ENCODE measurements at regions of chr6 and their contacts with region 1.

Region 1: DNA sequence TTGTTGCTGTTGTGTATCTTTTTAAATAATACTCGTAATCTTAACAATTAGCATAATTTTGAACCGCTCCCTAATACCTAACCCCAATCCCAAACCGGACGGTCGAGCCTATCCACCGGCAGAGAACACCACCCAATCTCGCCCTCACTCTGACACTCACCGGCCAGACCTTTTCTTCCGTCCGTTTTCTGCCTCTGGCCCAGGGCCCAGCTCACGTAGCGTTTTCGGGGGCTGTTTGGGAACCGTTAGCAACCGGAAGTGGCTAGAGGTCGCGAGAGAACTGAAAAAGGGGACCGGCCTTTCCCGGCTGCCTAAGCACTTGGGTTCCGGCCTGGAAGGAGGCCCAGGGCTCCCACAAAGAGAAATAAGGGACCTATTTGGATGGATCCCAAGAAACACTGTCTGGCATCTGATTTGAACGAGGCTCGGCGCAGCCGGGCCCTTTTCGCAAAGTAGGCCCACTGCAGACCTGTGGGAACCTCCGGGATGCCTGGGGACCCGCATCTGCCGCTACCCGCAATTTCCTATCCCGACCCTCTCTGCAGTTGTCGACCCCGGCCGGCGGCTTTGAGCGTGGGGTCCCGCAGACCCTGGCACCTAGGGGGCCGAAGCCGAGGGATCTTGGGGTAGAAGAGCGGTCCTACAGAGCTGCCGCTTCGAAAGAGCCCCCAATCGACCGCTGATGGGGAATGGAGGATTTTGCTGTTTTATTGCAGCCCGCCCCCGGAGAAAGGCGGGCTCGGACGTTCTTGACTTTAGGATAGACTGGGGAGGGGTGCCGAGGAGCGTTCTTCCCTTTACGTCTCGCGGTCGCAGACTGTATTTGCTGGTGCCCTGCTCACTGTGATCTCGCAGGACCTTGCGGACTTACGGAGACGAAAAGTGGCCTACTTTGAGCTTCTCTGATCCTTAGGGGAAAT is 4.8 kb upstream of the ZKSCAN8 start:
- DNase-seq: peak; percentile 89
- H3K4me3 ChIP-seq: peak overlapping the region; percentile 63 to 90 (median 90)
- H3K27ac ChIP-seq: peak overlapping the region; percentile 63
- H3K4me1 ChIP-seq: peaks cover 20% of the 10 kb centered on the region
- H3K27me3 ChIP-seq: no peaks in the 10 kb centered on the region
- CTCF ChIP-seq: no peak

Region 2: DNA sequence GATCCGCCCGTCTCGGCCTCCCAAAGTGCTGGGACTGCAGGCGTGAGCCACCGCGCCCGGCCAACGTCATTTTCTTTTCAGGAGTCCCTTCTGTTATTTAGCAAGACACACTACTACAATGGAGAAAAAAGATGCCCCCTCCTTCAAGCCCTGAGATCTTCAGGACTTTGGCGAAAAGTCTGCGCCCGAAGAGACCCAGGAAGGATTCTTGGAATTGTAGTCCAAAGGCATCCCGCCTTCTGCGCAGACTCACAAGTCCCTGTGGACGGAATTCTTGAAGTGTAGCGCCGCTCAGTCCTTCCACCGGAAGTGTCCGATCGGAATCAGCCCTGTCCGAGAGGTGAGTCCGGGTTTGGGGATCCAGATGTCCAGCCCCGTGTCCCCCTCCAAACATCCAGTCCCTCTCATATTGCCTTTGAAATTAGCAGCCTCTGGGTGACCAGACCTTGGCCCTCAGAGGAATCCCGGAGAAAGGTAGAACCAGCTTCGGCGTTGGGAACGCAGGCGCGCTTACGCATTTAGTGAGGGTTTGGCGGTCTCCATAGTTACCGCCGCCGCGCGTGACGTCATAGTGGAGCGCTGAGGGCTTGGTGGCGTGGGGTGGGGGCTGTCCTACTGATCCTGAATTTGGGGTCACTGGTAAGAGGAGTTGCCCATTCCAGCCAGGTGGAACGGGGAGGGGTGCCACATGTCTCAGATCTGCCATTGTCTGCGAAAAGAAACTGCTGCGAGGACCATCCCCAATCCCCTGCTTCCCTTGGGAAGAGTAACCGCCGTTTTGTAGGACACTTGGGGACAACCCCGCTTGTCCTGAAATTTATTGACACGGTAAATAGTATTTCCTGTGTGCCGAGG is 56.0 kb before region 1 on chr6:
- CTCF ChIA-PET with region 1: no interaction called
- dilution Hi-C with region 1: no loop called
- in situ Hi-C with region 1: no loop called
- intact Hi-C with region 1: loop called (anchors 1 kb)
- DNase-seq: peak; percentile 93
- H3K4me3 ChIP-seq: peak overlapping the region; percentile 52 to 67 (median 66)
- H3K27ac ChIP-seq: peak overlapping the region; percentile 96
- H3K4me1 ChIP-seq: peaks cover 4% of the 10 kb centered on the region
- H3K27me3 ChIP-seq: no peaks in the 10 kb centered on the region
- CTCF ChIP-seq: no peak

Region 3: DNA sequence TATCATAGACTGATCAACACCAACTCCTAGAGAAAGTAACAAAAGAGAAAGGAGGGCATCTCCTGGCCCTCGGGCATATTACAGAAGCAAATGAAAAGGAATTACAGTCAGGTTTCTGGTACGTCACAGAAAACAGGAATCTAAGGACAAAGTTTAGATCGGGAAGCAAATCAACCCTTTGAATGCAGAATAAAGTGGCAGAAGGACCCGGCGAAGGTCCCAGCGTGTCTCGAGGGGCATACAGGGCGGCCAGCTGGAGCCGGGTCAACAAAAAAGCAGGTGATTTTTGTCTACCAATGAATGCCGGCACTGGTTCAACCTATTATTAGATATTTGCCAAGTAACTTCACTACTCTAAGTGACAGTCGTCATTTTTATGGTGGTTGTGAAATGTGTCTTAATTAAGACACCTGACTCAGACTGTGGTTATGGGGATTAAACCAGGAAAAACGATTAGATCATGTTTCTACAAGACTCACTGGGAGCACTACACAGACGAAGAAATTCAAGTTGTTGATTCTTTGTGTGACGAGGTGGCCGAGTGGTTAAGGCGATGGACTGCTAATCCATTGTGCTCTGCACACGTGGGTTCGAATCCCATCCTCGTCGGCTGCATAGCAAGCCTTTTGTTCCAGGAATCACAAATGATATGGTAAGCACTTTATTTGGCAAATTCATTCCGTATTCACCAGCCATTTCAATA is 75.8 kb after region 1 on chr6:
- CTCF ChIA-PET with region 1: no interaction called
- dilution Hi-C with region 1: no loop called
- in situ Hi-C with region 1: loop called in 1 of 2 experiments (anchors 5 kb)
- intact Hi-C with region 1: loop called (anchors 1 kb)
- DNase-seq: peak; percentile 93
- H3K4me3 ChIP-seq: peak overlapping the region; percentile 61 to 62 (median 61)
- H3K27ac ChIP-seq: peak overlapping the region; percentile 77
- H3K4me1 ChIP-seq: peaks cover 19% of the 10 kb centered on the region
- H3K27me3 ChIP-seq: no peaks in the 10 kb centered on the region
- CTCF ChIP-seq: peak; percentile 13 to 28

Region 4: DNA sequence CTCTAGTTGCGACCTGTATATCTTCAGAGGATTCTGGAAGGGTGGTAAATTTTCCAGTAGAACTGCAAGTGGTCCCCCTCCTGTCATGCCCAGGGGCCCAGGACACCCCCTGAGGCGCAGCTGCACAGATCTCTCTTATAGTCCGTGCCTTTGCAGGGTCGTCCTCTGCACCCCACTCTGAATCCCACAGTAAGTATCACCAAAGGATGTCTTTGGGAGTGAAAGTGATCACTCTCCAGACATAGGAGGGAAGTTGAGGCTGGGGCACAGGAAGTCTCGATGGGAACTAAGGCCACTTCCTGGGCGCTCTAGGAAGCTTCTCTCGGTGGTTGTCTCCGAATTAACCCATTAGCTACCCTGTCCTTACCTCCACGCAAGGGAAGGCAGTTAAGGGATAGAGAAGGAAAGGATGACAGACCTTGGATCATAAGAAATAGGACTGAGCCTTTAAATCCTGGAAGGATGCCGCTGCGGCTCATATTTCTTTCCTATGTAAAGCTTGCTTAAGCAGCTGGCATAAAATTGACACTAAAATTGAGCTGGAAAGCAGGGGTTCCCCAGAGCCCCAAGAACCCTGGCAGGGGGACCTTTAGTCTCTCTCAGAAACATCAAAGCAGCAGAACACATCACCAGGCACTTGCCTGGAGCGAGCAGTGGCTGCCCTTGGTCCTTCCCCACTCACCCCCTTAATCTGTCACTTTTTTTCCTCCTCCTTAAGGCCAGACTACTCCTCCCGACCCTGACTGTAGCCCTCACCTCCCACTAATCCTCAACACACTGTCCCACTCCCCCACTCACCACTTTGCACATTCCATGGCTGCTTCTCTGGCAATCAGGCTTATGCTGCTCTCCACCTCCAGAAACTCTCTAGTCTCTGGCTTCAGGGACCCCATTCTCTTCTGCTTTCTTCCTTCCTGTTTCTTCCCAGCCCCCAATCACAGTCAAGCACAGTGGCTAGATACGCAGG is 115.4 kb after region 1 on chr6 and contains the start of gene ZKSCAN4:
- CTCF ChIA-PET with region 1: no interaction called
- dilution Hi-C with region 1: no loop called
- in situ Hi-C with region 1: loop called in 1 of 2 experiments (anchors 10 kb)
- intact Hi-C with region 1: loop called (anchors 1 kb)
- DNase-seq: peak; percentile 82
- H3K4me3 ChIP-seq: peak within 1 kb of the TSS; percentile 87 to 93 (median 89)
- H3K27ac ChIP-seq: peak within 1 kb of the TSS; percentile 8
- H3K4me1 ChIP-seq: peaks cover 8% of the 10 kb centered on the region
- H3K27me3 ChIP-seq: no peaks in the 10 kb centered on the region
- CTCF ChIP-seq: no peak
- total RNA-seq, gene ZKSCAN4: 3.6 to 5.8 TPM

Region 5: GRCh38 chr6:28355743-28356665 is 219.2 kb after region 1 on chr6:
- CTCF ChIA-PET with region 1: no interaction called
- dilution Hi-C with region 1: no loop called
- in situ Hi-C with region 1: loop called (anchors 5 to 10 kb)
- intact Hi-C with region 1: loop called (anchors 1 kb)
- DNase-seq: peak; percentile 77
- H3K4me3 ChIP-seq: peak overlapping the region; percentile 50 to 60 (median 59)
- H3K27ac ChIP-seq: peak overlapping the region; percentile 49
- H3K4me1 ChIP-seq: peaks cover 16% of the 10 kb centered on the region
- H3K27me3 ChIP-seq: no peaks in the 10 kb centered on the region
- CTCF ChIP-seq: peak; percentile 73 to 78

Measured in mammary epithelial cell (primary cell).